CD8-positive, alpha-beta T cell (primary cell): ENCODE measurements at regions of chr4 and their contacts with region 1.

Region 1: DNA sequence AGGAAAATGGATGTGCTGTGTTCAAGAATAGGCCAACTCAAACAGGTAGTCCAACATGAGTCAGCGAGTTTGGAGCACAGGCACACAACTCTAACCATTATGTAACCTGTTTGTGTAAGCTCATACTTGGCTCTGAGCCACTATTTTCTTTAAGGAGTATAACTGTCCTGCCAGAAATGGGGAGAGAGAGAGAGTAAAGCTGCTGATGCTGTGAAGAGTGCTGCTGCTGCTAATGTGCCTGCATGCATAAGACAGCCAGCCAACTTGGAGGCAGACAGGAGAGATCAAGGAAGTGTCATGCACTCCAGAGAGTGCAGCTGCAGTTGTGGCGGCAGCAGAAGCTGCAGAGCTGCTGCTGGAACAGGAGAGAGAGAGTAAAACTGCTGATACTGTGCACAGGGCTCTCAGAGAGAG is 11.7 kb upstream of the STATH start:
- DNase-seq: no peak
- ATAC-seq: no peak
- H3K4me3 ChIP-seq: no peak overlapping the region
- H3K4me3 Mint-ChIP-seq: no peak overlapping the region
- H3K27ac ChIP-seq: no peak overlapping the region
- H3K27ac Mint-ChIP-seq: no peak overlapping the region
- H3K4me1 ChIP-seq: no peaks in the 10 kb centered on the region
- H3K4me1 Mint-ChIP-seq: no peaks in the 10 kb centered on the region
- H3K27me3 ChIP-seq: no peaks in the 10 kb centered on the region
- H3K27me3 Mint-ChIP-seq: no peaks in the 10 kb centered on the region
- CTCF ChIP-seq: no peak

Region 2: DNA sequence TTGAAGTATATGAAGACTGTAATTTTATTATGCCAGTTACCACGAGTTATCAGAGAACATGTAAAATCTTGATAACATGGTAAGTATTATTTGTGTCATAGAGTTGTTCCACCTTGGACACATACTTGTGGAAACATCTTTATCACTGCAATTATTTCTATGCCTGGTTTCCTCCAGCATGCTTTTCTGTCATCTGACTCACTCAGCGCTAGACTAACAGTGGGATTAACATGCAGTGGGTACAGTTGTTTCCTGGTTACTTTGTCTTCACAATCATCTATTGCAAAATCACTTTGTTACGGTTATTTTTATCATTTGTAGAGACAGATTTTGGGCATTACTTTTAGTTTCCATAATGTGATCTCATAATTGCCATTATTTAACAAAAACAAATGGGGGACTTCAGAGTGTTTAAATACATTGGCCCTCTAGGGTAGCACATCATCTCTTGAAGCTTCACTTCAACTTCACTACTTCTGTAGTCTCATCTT is 11.5 kb after region 1 on chr4 and contains the start of gene STATH:
- CTCF ChIA-PET with region 1: no interaction called
- POLR2A ChIA-PET with region 1: no interaction called
- intact Hi-C with region 1: loop called in 1 of 2 experiments (anchors 1 kb)
- DNase-seq: no peak
- ATAC-seq: no peak
- H3K4me3 ChIP-seq: no peak within 1 kb of the TSS
- H3K4me3 Mint-ChIP-seq: no peak within 1 kb of the TSS
- H3K27ac ChIP-seq: no peak within 1 kb of the TSS
- H3K27ac Mint-ChIP-seq: no peak within 1 kb of the TSS
- H3K4me1 ChIP-seq: no peaks in the 10 kb centered on the region
- H3K4me1 Mint-ChIP-seq: no peaks in the 10 kb centered on the region
- H3K27me3 ChIP-seq: no peaks in the 10 kb centered on the region
- H3K27me3 Mint-ChIP-seq: no peaks in the 10 kb centered on the region
- CTCF ChIP-seq: no peak
- total RNA-seq, gene STATH: not detected

Region 3: DNA sequence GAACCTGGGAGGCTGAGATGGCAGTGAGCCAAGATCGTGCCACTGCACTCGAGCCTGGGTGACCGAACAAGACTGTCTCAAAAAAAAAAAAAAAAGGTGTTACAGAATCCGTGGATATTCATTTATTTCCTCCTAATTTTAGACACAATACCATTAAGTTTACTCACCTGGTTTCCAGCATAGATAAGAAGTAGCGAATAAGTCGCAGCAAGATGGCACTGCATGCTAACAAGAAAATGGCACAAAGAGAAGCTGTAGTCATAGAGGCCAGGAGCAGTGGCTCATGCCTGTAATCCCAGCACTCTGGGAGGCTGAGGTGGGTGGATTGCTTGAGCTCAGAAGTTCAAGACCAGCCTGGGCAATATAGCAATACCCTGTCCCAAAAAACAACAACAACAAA is 901.1 kb after region 1 on chr4:
- CTCF ChIA-PET with region 1: no interaction called
- POLR2A ChIA-PET with region 1: no interaction called
- intact Hi-C with region 1: no loop called
- DNase-seq: peak in 1 of 9 experiments; percentile 7
- ATAC-seq: no peak
- H3K4me3 ChIP-seq: no peak overlapping the region
- H3K4me3 Mint-ChIP-seq: no peak overlapping the region
- H3K27ac ChIP-seq: no peak overlapping the region
- H3K27ac Mint-ChIP-seq: no peak overlapping the region
- H3K4me1 ChIP-seq: no peaks in the 10 kb centered on the region
- H3K4me1 Mint-ChIP-seq: no peaks in the 10 kb centered on the region
- H3K27me3 ChIP-seq: no peaks in the 10 kb centered on the region
- H3K27me3 Mint-ChIP-seq: no peaks in the 10 kb centered on the region
- CTCF ChIP-seq: no peak